ENCODE measurements at regions of chr1 and their contacts with region 1.

Region 1: GRCh38 chr1:155729031-155729898 is 40.4 kb downstream of the DAP3 start:
- DNase-seq: peak; percentile 69
- ATAC-seq: peak; percentile 96
- H3K4me3 ChIP-seq: no peak overlapping the region
- H3K27ac ChIP-seq: no peak overlapping the region
- H3K4me1 ChIP-seq: no peaks in the 10 kb centered on the region
- H3K27me3 ChIP-seq: no peaks in the 10 kb centered on the region
- CTCF ChIP-seq: peak; percentile 56
- POLR2A ChIP-seq: no peak
- RAD21 ChIP-seq: peak; percentile 59

Region 2: DNA sequence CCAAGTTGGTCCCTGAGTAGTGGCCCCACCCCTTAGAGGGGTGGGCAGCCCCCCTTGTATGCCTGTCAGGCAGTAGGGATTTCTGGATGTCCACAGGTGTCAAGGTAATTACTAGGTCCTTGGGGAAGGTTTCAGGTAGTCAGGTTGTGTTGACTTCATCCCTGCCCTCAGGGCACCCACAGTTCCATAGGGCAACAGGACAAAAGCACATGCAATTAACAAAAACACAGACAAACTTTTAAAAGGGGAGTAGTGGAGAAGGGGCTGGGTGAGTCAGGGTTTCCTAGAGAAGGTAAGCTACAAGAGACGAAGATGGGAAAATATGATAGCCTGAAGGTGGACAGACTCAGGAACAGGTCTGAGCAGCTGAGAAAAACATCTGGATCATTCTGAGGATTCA is 570.3 kb before region 1 on chr1:
- CTCF ChIA-PET with region 1: no interaction called
- POLR2A ChIA-PET with region 1: interaction called, 15 read pairs
- dilution Hi-C with region 1: no loop called
- in situ Hi-C with region 1: no loop called
- intact Hi-C with region 1: no loop called
- DNase-seq: no peak
- ATAC-seq: no peak
- H3K4me3 ChIP-seq: no peak overlapping the region
- H3K27ac ChIP-seq: no peak overlapping the region
- H3K4me1 ChIP-seq: no peaks in the 10 kb centered on the region
- H3K27me3 ChIP-seq: peaks cover 7% of the 10 kb centered on the region
- CTCF ChIP-seq: no peak
- POLR2A ChIP-seq: no peak
- RAD21 ChIP-seq: no peak

Region 3: GRCh38 chr1:155681776-155682175 is 47.5 kb before region 1 on chr1:
- CTCF ChIA-PET with region 1: no interaction called
- POLR2A ChIA-PET with region 1: no interaction called
- dilution Hi-C with region 1: no loop called
- in situ Hi-C with region 1: no loop called
- intact Hi-C with region 1: loop called (anchors 5 kb)
- DNase-seq: no peak
- ATAC-seq: no peak
- H3K4me3 ChIP-seq: no peak overlapping the region
- H3K27ac ChIP-seq: no peak overlapping the region
- H3K4me1 ChIP-seq: peaks cover 2% of the 10 kb centered on the region
- H3K27me3 ChIP-seq: no peaks in the 10 kb centered on the region
- CTCF ChIP-seq: no peak
- POLR2A ChIP-seq: no peak
- RAD21 ChIP-seq: no peak

Measured in IMR-90 (cell line).